ENCODE measurements at regions of chr1 and their contacts with region 1.

Region 1: GRCh38 chr1:223081181-223081994 is 61.7 kb downstream of the TLR5 start:
- DNase-seq: peak; percentile 41 to 79 (median 65)
- H3K4me3 ChIP-seq: peak overlapping the region in 57 of 59 donors; percentile 19 to 68 (median 48)
- H3K27ac ChIP-seq: peak overlapping the region in 17 of 59 donors; percentile 1 to 64 (median 54)
- H3K27me3 ChIP-seq: peaks cover 0 to 51% (median 0%) of the 10 kb centered on the region in 45 donors
- CTCF ChIP-seq: peak; percentile 59 to 97 (median 89)

Region 2: DNA sequence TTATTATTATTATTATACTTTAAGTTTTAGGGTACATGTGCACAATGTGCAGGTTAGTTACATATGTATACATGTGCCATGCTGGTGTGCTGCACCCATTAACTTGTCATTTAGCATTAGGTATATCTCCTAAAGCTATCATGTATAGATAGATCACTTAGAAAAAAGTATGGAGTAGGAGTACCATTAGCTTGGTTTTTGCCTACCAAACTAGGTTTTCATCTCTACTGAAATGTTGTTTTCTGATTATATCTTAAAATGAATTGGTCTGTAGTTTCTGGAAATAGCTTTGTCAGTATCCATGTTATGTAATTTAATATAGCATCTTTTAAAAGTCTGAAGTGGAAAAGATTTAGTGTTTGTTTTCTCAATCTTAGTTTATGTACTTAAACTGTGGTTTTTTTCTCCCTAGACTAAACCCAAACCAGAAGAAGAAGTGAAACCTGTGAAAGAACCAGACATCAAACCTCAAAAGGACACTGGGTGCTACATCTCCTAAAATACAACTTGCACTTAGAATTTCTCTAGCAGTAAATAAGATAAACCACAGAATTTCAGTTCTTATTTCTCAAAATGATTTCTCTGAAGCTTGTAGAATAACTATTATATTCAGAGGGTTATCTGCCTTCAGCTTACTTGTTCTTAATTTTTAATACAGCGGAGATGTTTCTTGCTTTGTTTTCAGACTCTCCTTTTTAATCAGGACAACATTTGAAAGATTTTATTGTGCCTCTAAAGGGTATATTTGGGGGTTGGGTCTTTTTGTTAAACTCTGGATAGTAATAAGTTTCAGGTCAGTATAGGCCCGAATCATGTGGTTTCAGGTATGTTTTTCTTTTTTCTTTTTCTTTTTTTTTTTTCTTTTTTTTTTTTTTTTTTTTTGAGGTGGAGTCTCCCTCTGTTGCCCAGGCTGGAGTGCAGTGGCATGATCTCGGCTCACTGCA is 348.9 kb before region 1 on chr1:
- intact Hi-C with region 1: loop called in 1 of 2 experiments (anchors 5 kb)
- DNase-seq: no peak
- H3K4me3 ChIP-seq: no peak overlapping the region
- H3K27ac ChIP-seq: peak overlapping the region in 30 of 59 donors; percentile 1 to 67 (median 40)
- H3K27me3 ChIP-seq: no peaks in the 10 kb centered on the region
- CTCF ChIP-seq: no peak

Region 3: DNA sequence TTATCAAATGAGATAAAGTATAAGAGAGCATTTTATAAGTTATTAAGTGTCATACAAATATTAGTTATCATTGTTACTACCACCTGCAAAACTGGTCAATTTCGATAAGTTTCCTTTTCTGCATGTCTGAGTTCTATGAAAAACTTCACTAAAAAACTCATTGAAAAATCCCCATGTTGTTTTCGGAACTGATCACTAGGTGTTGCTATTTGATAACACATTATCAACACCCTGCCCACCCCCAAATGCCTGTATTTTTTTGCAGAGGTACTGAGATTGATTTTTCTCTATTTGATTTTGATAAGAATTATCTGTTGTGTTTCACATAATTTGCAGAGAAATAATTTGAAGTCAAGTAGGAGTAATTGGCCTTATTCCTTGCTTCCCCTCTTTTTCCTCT is 288.6 kb before region 1 on chr1:
- intact Hi-C with region 1: loop called (anchors 2 to 5 kb)
- DNase-seq: no peak
- H3K4me3 ChIP-seq: no peak overlapping the region
- H3K27ac ChIP-seq: no peak overlapping the region
- H3K27me3 ChIP-seq: peaks cover 0 to 12% (median 0%) of the 10 kb centered on the region in 45 donors
- CTCF ChIP-seq: peak; percentile 26 to 90 (median 68)

Measured in dorsolateral prefrontal cortex (tissue), 120 donors.